ENCODE measurements at regions of chr3 and their contacts with region 1.

Region 1: GRCh38 chr3:53269888-53270880 is 14.4 kb upstream of the TKT start:
- DNase-seq: peak; percentile 87 to 95
- H3K4me3 ChIP-seq: no peak overlapping the region
- H3K4me3 Mint-ChIP-seq: peak overlapping the region; percentile 7
- H3K27ac Mint-ChIP-seq: peak overlapping the region; percentile 90
- H3K4me1 ChIP-seq: peaks cover 36% of the 10 kb centered on the region
- H3K4me1 Mint-ChIP-seq: peaks cover 29% of the 10 kb centered on the region
- H3K27me3 ChIP-seq: no peaks in the 10 kb centered on the region
- H3K27me3 Mint-ChIP-seq: no peaks in the 10 kb centered on the region
- CTCF ChIP-seq: no peak

Region 2: DNA sequence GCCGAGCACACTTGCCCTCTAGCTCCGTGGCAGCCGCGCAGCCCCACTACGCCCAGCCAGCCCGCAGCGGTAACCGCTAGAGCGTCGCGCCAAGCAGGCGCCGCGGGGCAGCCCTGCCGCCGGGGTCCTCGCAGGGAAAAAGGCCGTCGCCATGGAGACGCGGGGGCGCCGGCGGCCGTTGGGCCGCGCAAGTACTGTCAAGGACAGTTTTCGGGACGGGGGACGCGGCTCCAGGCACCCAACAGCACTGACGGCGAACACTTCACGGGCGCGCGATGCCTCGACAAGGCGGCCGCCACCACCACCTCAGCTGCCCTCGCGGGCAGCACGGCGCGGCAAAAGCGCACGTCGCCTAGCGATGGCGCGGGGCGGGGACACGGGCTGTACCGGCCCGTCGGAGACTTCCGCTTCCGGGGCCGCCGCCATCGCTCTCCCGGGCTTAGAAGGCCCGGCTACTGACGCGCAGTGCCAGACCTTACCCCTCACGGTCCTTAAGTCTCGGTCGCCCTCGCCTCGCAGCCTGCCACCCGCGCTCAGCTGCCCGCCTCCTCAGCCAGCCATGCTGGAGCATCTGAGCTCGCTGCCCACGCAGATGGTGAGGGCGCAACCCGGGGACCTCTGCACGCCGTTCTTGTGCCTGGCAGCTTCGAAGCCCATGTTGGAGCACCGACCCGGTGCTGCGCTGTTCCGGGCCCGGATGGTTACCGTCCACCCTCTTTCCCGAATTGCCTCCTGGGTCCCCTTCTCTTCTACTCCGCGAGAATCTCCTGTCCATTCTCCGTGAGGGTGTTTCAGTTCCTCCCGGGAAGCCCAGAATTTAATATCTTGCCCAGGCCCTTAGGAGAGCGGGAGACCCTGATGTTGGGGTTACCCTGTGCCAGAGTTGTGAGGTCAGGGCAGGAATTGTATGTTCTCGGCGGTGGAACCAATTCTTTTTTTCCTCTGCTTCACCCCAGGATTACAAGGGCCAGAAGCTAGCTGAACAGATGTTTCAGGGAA is 564.2 kb before region 1 on chr3 and contains the starts of genes GLT8D1 and SPCS1:
- CTCF ChIA-PET with region 1: no interaction called
- POLR2A ChIA-PET with region 1: no interaction called
- intact Hi-C with region 1: no loop called
- DNase-seq: peak; percentile 80 to 87
- H3K4me3 ChIP-seq: peak within 1 kb of the TSS; percentile 90
- H3K4me3 Mint-ChIP-seq: peak within 1 kb of the TSS; percentile 96
- H3K27ac Mint-ChIP-seq: peak within 1 kb of the TSS; percentile 95
- H3K4me1 ChIP-seq: peaks cover 9% of the 10 kb centered on the region; the same call in 1 of the 2 replicates
- H3K4me1 Mint-ChIP-seq: peaks cover 7% of the 10 kb centered on the region
- H3K27me3 ChIP-seq: no peaks in the 10 kb centered on the region
- H3K27me3 Mint-ChIP-seq: no peaks in the 10 kb centered on the region
- CTCF ChIP-seq: no peak
- total RNA-seq, gene GLT8D1: 30.5 and 31.4 TPM in 2 replicates
- total RNA-seq, gene SPCS1: 141 and 153 TPM in 2 replicates

Region 3: DNA sequence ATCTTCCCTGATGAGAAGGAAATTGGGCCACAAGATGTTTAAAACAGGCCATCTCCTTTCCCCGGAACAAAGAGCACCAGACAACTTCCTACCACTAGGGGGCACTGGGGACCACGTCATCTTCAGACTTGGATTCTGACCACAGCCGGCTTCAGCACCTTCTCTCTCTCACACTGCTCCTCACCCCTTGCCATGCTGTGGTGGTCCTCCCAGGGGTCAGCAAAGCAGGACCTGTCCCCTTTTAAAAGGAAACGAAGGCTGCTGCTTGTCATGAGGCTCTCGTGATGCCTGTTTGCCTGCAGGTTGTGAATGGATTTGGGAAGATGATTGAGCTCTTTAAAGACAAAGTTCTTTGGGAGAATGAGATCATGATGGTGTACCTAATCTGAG is 156.2 kb before region 1 on chr3:
- CTCF ChIA-PET with region 1: no interaction called
- POLR2A ChIA-PET with region 1: no interaction called
- intact Hi-C with region 1: loop called (anchors 10 kb)
- DNase-seq: peak; percentile 75 to 82
- H3K4me3 ChIP-seq: no peak overlapping the region
- H3K4me3 Mint-ChIP-seq: no peak overlapping the region
- H3K27ac Mint-ChIP-seq: no peak overlapping the region
- H3K4me1 ChIP-seq: no peaks in the 10 kb centered on the region
- H3K4me1 Mint-ChIP-seq: no peaks in the 10 kb centered on the region
- H3K27me3 ChIP-seq: no peaks in the 10 kb centered on the region
- H3K27me3 Mint-ChIP-seq: no peaks in the 10 kb centered on the region
- CTCF ChIP-seq: peak; percentile 85 to 89

Region 4: GRCh38 chr3:53180305-53181023 is 89.7 kb before region 1 on chr3:
- CTCF ChIA-PET with region 1: no interaction called
- POLR2A ChIA-PET with region 1: no interaction called
- intact Hi-C with region 1: no loop called
- DNase-seq: no peak
- H3K4me3 ChIP-seq: no peak overlapping the region
- H3K4me3 Mint-ChIP-seq: no peak overlapping the region
- H3K27ac Mint-ChIP-seq: no peak overlapping the region
- H3K4me1 ChIP-seq: no peaks in the 10 kb centered on the region
- H3K4me1 Mint-ChIP-seq: no peaks in the 10 kb centered on the region
- H3K27me3 ChIP-seq: no peaks in the 10 kb centered on the region
- H3K27me3 Mint-ChIP-seq: no peaks in the 10 kb centered on the region
- CTCF ChIP-seq: no peak

Region 5: DNA sequence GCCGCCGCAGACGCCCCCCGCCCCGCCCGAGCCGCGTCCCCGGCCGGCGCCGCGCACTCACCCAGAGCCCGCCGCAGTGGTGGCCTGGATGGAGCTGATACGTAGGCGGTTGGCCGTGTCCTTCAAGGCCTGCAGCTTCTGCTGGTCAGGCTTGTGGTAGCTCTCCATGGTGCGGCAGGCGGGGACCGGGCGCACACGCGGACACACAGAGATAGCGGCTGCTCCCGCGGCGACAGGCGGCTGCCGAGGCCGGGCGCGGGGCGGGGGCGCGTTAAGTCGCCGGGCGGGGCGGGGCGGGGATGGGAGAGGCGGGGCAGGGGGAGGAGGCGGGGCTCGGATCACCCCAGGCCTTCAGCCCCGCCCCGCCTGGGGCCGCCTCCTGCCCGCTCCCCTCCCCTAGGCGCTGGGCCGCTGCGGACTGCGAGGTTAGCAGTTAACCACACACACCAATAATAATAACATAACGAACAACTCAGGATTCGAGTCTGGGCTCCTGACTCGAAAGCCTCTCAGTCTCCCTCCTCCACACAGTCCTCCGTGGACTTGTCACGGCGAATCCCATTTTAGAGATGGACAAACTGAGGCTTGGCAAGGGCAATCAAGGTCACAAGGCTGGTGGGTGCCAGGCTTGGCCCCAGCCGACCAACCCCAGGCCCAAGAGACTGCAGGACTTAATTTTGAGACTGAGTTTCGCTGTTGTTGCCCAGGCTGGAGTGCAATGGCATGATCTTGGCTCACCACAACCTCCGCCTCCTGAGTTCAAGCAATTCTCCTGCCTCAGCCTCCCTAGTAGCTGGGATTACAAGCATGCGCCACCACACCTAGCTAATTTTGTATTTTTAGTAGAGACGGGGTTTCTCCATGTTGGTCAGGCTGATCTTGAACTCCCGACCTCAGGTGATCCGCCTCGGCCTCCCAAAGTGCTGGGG is 14.1 kb before region 1 on chr3 and contains the start of gene TKT:
- CTCF ChIA-PET with region 1: no interaction called
- POLR2A ChIA-PET with region 1: interaction called, 8 read pairs
- intact Hi-C with region 1: loop called (anchors 1 kb)
- DNase-seq: peak; percentile 85 to 87
- H3K4me3 ChIP-seq: peak within 1 kb of the TSS; percentile 73
- H3K4me3 Mint-ChIP-seq: peak within 1 kb of the TSS; percentile 79
- H3K27ac Mint-ChIP-seq: peak within 1 kb of the TSS; percentile 71
- H3K4me1 ChIP-seq: peaks cover 25% of the 10 kb centered on the region
- H3K4me1 Mint-ChIP-seq: peaks cover 13% of the 10 kb centered on the region
- H3K27me3 ChIP-seq: no peaks in the 10 kb centered on the region
- H3K27me3 Mint-ChIP-seq: no peaks in the 10 kb centered on the region
- CTCF ChIP-seq: no peak
- total RNA-seq, gene TKT: 339 and 381 TPM in 2 replicates

Measured in Caco-2 (cell line).